MCF 10A (cell line): ENCODE measurements at regions of chr5 and their contacts with region 1.

Region 1: DNA sequence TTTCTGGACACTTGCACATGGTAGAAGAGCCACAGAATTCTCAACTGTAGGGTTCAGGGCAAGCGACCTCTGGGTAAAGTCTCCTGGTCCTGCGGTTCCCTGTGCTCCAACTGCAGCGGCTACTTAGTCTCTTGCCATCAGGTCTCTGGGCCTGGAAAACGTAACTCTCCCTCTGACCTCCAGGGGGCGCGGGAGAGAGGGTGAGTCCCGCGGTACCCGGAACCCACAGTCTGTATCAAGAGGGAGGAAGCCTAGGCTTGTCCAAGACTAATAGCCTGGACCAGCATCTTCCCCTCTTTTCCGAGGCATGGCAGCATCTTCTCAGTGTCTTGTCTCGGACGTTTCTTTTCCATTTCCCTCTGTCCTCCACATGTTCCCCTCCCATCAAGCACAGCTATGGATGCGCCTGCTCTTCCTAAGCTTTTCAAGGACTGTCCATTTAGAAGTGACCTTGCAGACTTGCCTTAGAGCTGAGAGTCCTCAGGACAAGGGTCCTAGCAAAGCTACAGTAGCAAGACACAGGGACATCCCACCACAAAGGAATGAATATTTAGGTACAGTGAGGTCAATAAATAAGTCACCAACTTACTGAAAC is 59.3 kb downstream of the FSTL4 start:
- DNase-seq: peak; percentile 79
- H3K4me3 Mint-ChIP-seq: no peak overlapping the region
- H3K27ac Mint-ChIP-seq: no peak overlapping the region
- H3K4me1 Mint-ChIP-seq: no peaks in the 10 kb centered on the region
- H3K27me3 Mint-ChIP-seq: peaks cover 100% of the 10 kb centered on the region
- CTCF ChIP-seq: peak; percentile 95

Region 2: DNA sequence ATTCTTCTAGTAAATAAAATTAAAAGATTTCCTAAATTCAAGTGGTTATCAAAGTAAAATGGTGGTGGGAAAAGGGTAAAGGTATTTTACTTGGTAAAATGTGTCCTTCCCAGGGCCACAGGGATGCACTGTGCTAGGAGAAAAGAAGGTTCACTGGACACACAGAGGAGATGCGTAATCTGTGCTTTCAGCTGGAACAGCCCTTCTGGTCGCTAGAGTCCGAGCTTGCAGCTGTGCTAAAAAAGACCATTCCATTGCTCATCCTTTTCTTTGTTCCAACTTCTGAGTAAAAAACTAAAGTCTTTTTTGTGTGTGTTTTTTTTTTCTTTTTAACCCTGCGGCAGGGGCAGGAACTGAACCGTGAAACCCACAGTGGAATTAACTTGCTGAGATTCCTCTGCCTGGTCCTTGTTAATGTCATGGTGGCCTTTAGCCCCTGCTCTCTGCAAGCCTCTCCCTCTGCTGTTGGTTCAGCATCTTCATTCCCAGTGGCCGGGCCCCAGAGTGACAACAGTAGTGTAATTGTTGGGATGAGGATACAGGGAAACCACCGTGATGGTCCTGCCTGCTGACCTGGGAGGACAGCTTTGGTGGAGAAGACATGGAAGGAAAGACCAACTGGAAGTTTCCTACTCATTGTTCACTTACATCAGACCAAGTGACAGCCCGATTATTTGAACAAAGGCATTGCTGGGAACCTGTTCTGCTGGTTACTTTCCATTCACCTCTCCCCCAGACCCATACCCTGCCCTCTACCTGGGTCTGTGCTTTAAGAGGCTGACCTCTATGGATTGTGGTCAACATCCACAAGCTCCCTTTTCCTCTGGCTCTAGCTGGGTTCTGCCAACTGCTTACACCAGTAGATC is 91.2 kb after region 1 on chr5:
- CTCF ChIA-PET with region 1: no interaction called
- POLR2A ChIA-PET with region 1: no interaction called
- intact Hi-C with region 1: no loop called
- DNase-seq: no peak
- H3K4me3 Mint-ChIP-seq: no peak overlapping the region
- H3K27ac Mint-ChIP-seq: no peak overlapping the region
- H3K4me1 Mint-ChIP-seq: no peaks in the 10 kb centered on the region
- H3K27me3 Mint-ChIP-seq: peaks cover 95% of the 10 kb centered on the region
- CTCF ChIP-seq: no peak

Region 3: DNA sequence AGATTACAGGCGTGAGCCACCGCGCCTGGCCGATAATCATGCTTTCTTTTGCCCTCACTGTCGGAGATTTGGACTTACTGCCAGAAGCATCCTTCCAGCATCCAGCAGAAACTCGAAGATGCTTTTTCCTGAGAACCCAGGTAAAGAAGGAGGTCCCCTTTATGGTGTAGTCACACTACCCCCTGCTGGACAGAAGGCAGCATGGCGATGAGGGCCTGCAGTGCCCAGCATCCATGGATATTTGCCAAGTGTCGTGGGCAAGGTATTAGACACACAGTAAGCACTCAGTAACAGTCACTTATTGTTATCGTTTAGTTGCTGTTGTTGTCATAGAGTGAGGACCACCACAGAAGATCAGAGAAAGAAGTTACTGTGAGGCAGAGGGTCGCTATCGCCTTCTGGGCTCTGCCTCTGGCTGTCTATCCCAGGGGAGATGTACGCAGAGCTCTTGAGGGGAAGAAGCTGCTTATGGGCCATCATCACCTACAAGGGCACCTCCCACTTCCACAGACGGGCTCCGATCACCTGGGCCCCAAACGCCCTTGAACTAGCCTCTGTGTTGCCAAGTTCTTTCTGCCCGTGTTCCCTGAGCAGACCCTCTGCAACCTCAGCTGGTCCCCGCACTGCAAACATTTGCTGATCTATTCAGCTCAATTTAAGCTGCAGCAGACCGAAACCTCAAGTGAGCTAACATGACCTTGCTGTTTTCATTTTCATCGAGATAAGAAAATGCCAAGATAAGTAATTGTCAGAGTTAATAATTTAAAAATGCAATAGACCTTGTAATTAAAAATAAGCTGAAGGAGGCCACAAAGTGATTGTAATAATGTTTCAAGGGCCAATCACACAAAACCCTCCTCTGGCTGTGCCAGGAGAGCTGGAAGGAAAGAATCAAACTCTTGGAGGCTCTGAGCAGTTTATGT is 391.5 kb after region 1 on chr5:
- CTCF ChIA-PET with region 1: no interaction called
- POLR2A ChIA-PET with region 1: no interaction called
- intact Hi-C with region 1: loop called (anchors 1 kb)
- DNase-seq: peak; percentile 80
- H3K4me3 Mint-ChIP-seq: no peak overlapping the region
- H3K27ac Mint-ChIP-seq: no peak overlapping the region
- H3K4me1 Mint-ChIP-seq: no peaks in the 10 kb centered on the region
- H3K27me3 Mint-ChIP-seq: no peaks in the 10 kb centered on the region
- CTCF ChIP-seq: peak; percentile 61